Activated T-helper 1 cell treated with anti-CD3 and anti-CD28 coated beads, Interleukin-12 subunit alpha, Interleukin-12 subunit beta, Interleukin-2, Interleukin-4 antibody, amounts not matched to agents 30 ng/mL and 10 ng/mL and 1 ng/mL, durations not matched to agents 14 hours and 24 hours and 36 hours (primary cell): ENCODE measurements at regions of chr12 and their contacts with region 1.

Region 1: DNA sequence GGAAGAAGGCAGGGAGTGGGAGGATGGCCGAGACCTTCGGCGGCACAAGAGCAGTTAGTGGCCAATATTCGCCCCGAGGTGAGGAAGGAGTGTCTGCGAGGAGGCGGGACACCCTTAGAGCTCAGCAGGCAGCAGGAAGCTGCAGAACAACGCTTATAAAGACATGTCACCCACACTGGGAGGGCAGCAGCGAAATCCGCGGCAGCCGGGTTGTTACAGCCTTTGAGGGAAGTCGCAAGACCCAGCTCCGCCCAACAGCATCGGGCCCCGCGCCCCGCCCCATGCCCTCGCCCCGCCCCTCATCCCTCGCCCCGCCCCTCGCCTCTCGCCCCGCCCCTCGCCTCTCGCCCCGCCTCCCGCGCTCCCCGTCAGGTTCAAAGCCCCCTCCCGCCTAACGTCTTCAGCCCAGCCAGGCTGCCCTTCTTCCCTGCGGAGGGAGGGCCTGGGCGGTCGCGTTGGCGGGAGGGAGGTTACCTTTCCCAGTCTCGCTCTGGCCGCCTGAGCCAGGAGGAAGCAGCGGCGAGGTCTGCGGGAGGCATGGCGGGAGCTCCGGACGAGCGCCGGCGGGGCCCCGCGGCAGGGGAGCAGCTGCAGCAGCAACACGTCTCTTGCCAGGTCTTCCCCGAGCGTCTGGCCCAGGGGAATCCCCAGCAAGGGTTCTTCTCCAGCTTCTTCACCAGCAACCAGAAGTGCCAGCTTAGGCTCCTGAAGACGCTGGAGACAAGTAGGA is at the start of gene ATP23:
- DNase-seq: peak; percentile 86
- H3K4me3 Mint-ChIP-seq: peak within 1 kb of the TSS; percentile 89
- H3K27ac Mint-ChIP-seq: peak within 1 kb of the TSS; percentile 95
- H3K4me1 Mint-ChIP-seq: peaks cover 46% of the 10 kb centered on the region
- H3K27me3 Mint-ChIP-seq: no peaks in the 10 kb centered on the region
- total RNA-seq, gene ATP23: 7.3 and 8.7 TPM in 2 replicates

Region 2: DNA sequence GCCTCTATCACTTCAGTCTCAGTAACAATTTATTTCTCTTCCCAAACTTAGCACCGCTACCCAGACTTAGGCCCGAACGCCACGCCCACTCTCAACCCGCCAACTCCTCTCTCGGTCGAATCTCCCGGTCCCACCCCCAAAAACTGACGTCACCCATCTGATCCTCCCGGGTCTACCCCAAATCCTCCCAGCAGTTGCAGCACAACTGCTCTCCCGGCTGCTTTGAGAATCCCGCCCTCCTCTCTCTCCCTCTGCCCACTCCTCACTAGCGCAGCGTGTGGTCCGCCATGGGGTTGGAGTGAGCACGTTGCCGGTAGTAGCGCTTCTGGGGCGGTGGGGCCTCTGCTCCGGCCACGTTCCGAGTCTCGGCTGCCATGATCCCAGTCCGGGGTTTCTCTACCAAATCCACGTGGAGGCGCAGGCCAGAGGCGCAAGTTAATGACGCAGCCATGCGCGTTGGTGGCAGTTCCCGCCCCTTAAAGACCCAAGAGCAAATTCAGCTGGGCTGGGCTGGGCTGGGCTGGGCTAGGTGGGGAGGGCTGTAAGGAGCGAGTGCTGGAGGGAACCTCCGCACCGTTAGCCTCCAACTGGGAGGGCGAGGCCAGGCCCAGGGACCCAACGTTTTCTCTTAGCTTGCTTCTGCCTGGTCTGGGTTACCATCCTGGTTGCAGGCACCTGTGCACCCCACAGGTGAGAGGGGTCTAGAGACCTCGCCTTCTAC is 169.5 kb before region 1 on chr12 and contains the start of gene METTL1:
- intact Hi-C with region 1: loop called (anchors 1 kb)
- DNase-seq: peak; percentile 90
- H3K4me3 Mint-ChIP-seq: peak within 1 kb of the TSS; percentile 93
- H3K27ac Mint-ChIP-seq: peak within 1 kb of the TSS; percentile 99
- H3K4me1 Mint-ChIP-seq: peaks cover 40% of the 10 kb centered on the region
- H3K27me3 Mint-ChIP-seq: no peaks in the 10 kb centered on the region
- total RNA-seq, gene METTL1: 89.7 and 90.0 TPM in 2 replicates

Region 3: GRCh38 chr12:58425481-58426392 is 484.4 kb after region 1 on chr12:
- intact Hi-C with region 1: loop called (anchors 1 kb)
- DNase-seq: peak; percentile 9
- H3K4me3 Mint-ChIP-seq: peak overlapping the region; percentile 58
- H3K27ac Mint-ChIP-seq: peak overlapping the region; percentile 87
- H3K4me1 Mint-ChIP-seq: peaks cover 43% of the 10 kb centered on the region
- H3K27me3 Mint-ChIP-seq: peaks cover 28% of the 10 kb centered on the region